PC-9 (cell line): ENCODE measurements at regions of chr5 and their contacts with region 1.

Region 1: GRCh38 chr5:34717426-34718327 is 61.5 kb downstream of the RAI14 start:
- DNase-seq: peak; percentile 87 to 100
- H3K4me3 ChIP-seq: peak overlapping the region; percentile 17; the same call in 1 of the 2 replicates
- H3K27ac ChIP-seq: peak overlapping the region; percentile 97
- H3K4me1 ChIP-seq: peaks cover 60% of the 10 kb centered on the region
- H3K27me3 ChIP-seq: no peaks in the 10 kb centered on the region
- CTCF ChIP-seq: no peak

Region 2: DNA sequence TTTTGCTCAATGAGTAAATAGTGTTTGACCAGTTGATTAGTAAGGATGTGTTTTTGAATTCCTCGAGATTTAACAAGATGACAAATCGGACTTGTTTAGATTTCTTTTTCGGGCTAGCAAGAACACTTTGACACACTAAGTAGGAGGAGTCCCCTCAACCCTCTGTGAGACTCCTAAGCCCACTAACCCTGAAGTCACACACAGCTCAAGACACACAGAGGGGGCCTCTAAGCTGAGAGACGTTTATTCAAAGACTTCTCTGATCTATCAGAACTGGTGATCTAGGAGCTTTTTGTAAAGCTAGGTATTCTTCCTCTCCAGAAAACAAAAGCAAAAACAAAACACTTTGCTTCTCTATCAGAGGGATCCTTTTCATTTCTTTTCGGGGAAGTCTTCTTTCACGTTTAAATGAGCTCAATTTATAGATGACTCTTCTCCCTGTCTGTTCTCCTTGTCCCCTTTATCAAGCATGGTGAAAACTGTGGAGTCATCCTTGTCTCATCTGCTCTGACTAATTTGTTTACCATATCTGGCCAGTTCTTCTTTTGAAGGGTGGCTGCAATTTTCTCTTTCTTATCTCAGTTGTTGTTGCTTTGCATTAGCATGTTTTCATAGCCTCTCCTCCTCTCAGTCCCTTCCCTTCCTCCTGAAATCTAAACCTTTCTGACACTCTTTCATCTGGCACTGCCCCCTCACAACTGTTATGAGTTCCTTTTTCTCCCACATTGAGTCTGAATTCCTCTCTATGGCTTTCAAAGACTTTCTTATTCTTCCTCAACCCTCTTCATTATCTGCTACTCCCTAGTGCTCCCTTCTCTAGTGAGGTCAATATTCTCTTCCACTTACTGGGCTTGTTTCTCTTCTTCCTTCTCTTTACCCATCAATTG is 130.1 kb before region 1 on chr5:
- CTCF ChIA-PET with region 1: no interaction called
- POLR2A ChIA-PET with region 1: interaction called, 7 read pairs
- intact Hi-C with region 1: loop called (anchors 1 kb)
- DNase-seq: peak in 1 of 2 experiments; percentile 86
- H3K4me3 ChIP-seq: peak overlapping the region; percentile 51
- H3K27ac ChIP-seq: peak overlapping the region; percentile 97
- H3K4me1 ChIP-seq: peaks cover 76% of the 10 kb centered on the region
- H3K27me3 ChIP-seq: no peaks in the 10 kb centered on the region
- CTCF ChIP-seq: no peak

Region 3: DNA sequence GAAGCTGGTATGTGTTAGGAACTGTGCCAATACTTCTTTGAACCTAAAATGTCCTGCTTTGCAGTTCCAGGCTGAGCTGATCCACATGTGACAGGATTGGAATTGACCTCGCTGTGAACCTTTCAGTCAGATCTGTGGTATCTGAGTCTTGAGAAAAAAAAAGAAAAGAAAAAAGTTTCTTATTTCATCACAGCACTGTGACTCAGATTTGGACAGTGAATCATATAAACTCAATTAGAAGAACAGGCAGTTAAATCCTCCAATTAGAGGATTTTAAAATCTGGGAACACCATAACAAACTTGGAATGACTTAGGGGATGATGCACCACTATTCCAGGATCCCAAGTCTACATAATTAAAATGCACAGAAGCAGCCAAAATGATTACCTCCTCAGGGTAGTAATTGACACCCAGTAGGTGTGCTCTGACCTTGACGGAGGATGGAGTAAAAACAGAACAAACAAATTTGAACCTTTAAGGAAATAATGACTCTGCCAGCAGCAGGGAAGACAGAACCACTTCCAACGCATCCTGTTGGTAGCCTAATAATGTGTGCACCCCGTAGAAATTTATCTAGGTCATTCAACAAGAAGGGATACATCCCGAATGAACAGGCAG is 119.4 kb before region 1 on chr5:
- CTCF ChIA-PET with region 1: no interaction called
- POLR2A ChIA-PET with region 1: no interaction called
- intact Hi-C with region 1: loop called (anchors 1 kb)
- DNase-seq: peak; percentile 69 to 98
- H3K4me3 ChIP-seq: peak overlapping the region; percentile 6; the same call in 1 of the 2 replicates
- H3K27ac ChIP-seq: peak overlapping the region; percentile 88
- H3K4me1 ChIP-seq: peaks cover 43% of the 10 kb centered on the region
- H3K27me3 ChIP-seq: no peaks in the 10 kb centered on the region
- CTCF ChIP-seq: no peak

Region 4: GRCh38 chr5:34608859-34609648 is 108.6 kb before region 1 on chr5:
- CTCF ChIA-PET with region 1: no interaction called
- POLR2A ChIA-PET with region 1: no interaction called
- intact Hi-C with region 1: loop called (anchors 1 kb)
- DNase-seq: peak; percentile 43 to 94
- H3K4me3 ChIP-seq: peak overlapping the region; percentile 12; the same call in 1 of the 2 replicates
- H3K27ac ChIP-seq: peak overlapping the region; percentile 82
- H3K4me1 ChIP-seq: peaks cover 39% of the 10 kb centered on the region
- H3K27me3 ChIP-seq: no peaks in the 10 kb centered on the region
- CTCF ChIP-seq: no peak

Region 5: DNA sequence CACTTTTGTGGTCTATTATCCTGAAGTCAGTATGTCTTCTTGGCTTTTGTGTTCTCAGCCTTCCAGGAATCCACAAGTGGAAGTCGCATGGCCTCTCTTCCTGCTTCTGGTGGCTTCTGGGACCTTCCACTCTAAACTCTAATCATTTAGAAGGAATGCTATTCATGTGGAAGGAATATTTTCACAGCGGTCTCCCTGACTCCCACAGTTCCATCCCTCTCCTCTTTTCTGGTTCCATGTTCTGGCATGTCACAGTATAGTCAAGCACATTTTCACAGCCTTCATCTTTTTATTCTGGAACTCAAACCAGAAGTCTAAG is 68.9 kb before region 1 on chr5:
- CTCF ChIA-PET with region 1: no interaction called
- POLR2A ChIA-PET with region 1: no interaction called
- intact Hi-C with region 1: no loop called
- DNase-seq: no peak
- H3K4me3 ChIP-seq: no peak overlapping the region
- H3K27ac ChIP-seq: no peak overlapping the region
- H3K4me1 ChIP-seq: 0 out of 2 replicates have a peak, but pooled peaks cover 4% of the 10 kb centered on the region
- H3K27me3 ChIP-seq: no peaks in the 10 kb centered on the region
- CTCF ChIP-seq: no peak

Region 6: DNA sequence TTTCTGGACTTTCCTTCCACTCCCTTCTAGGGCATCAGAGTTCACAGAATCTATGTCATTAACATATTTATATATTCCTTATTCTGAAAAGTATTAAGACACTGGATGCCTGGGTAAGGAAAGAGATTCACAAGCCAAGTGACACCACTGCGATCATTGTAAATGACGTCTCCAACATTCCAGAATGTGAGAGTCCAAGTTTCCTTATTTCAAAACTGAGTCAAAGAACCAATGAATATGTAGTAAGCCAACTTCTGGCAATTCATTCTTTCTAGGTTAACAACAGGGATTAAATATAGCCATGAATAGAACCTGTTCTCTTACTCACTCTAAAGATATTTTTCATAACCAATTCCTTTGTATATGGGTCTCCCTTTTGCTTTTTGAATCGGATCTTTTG is 43.5 kb before region 1 on chr5:
- CTCF ChIA-PET with region 1: interaction called, 3 read pairs
- POLR2A ChIA-PET with region 1: no interaction called
- intact Hi-C with region 1: loop called (anchors 1 kb)
- DNase-seq: peak; percentile 47 to 88
- H3K4me3 ChIP-seq: no peak overlapping the region
- H3K27ac ChIP-seq: peak overlapping the region; percentile 66
- H3K4me1 ChIP-seq: peaks cover 44% of the 10 kb centered on the region
- H3K27me3 ChIP-seq: no peaks in the 10 kb centered on the region
- CTCF ChIP-seq: no peak

Region 7: GRCh38 chr5:34735491-34736363 is 18.1 kb after region 1 on chr5:
- CTCF ChIA-PET with region 1: interaction called, 4 read pairs
- POLR2A ChIA-PET with region 1: interaction called, 3 read pairs
- intact Hi-C with region 1: loop called (anchors 1 kb)
- DNase-seq: peak; percentile 50 to 67
- H3K4me3 ChIP-seq: no peak overlapping the region
- H3K27ac ChIP-seq: peak overlapping the region; percentile 20
- H3K4me1 ChIP-seq: peaks cover 14% of the 10 kb centered on the region
- H3K27me3 ChIP-seq: no peaks in the 10 kb centered on the region
- CTCF ChIP-seq: no peak

Region 8: GRCh38 chr5:34886392-34887119 is 168.9 kb after region 1 on chr5:
- CTCF ChIA-PET with region 1: no interaction called
- POLR2A ChIA-PET with region 1: interaction called, 16 read pairs
- intact Hi-C with region 1: no loop called
- DNase-seq: no peak
- H3K4me3 ChIP-seq: no peak overlapping the region
- H3K27ac ChIP-seq: no peak overlapping the region
- H3K4me1 ChIP-seq: no peaks in the 10 kb centered on the region
- H3K27me3 ChIP-seq: no peaks in the 10 kb centered on the region
- CTCF ChIP-seq: no peak